ENCODE measurements at regions of chrX and their contacts with region 1.

Region 1: GRCh38 chrX:3651276-3651675 is 62.2 kb downstream of the PRKX start:
- DNase-seq: peak; percentile 38
- H3K4me3 ChIP-seq: no peak overlapping the region
- H3K27ac ChIP-seq: no peak overlapping the region
- H3K4me1 ChIP-seq: no peaks in the 10 kb centered on the region
- H3K27me3 ChIP-seq: no peaks in the 10 kb centered on the region
- CTCF ChIP-seq: peak; percentile 80
- EP300 ChIP-seq: no peak
- RAD21 ChIP-seq: peak; percentile 63

Region 2: DNA sequence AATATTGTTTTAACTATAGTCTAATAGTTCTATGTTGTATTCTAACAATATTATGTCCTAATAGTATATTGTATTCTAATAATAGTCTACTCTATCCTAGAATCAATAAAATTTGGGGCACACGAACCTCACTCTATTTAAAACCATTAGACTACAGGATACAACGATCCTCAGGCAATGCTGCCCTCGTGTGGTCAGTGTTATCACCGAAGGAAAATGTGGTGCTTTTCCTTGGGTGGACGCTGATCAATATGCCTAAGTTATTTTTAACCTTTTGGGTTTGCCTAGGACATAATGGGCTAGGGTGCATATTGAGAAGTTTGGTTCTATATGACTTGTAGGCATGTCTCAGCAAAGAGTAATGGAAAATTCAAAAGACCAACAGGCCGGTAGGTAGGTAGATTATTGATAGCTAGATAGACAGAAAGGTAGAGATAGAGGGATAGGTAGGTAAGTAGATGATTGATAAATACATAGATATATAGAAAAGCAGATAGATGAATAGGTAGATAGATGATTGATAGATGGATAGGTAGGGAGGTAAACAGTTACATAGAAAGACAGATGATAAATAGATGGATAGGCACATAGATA is 12.9 kb before region 1 on chrX:
- CTCF ChIA-PET with region 1: interaction called, 10 read pairs
- POLR2A ChIA-PET with region 1: no interaction called
- DNase-seq: peak; percentile 57
- H3K4me3 ChIP-seq: no peak overlapping the region
- H3K27ac ChIP-seq: no peak overlapping the region
- H3K4me1 ChIP-seq: no peaks in the 10 kb centered on the region
- H3K27me3 ChIP-seq: no peaks in the 10 kb centered on the region; the same call in 1 of the 2 replicates
- CTCF ChIP-seq: peak; percentile 89
- EP300 ChIP-seq: no peak
- RAD21 ChIP-seq: peak; percentile 73

Region 3: DNA sequence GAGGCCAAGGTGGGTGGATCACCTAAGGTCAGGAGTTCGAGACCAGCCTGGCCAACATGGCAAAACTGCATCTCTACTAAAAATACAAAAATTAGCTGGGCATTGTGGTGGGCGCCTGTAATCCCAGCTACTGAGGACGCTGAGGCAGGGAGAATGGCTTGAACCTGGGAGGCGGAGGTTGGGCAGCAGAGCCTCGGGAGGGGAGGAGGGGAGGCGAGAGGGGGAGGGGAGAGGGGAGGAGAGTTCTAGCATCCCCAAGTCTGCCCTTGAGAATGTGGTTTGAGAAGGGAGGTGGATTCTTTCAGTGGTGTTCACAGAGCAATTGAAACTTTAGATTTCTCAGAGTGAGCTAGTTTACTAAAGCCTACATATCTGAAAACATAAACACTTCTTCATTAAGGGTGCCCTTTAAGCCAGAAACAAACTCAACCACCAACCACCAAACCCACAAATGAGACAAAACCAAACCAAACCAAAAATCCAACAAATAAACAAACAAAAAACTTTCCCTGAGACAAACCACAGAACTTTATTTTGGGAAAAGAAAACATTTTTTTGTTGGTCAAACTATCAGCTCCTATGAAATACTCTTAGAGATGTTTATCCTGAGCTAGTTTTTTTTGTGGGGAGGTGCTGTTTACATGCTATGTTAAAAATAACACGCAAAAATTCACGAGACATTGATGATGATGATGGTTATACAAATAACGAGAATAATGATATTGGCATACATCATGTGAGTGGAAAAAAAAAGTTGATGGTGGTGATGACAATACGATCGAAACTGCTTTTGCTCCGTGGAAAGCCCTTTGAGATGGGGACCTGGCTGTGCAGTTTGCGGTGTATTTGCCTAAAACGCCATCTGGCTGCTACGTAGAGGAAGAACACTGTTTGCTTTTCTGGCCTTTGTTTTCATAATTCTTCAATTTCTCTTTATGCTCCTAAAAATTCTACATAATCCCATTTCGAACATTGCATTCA is 160.3 kb after region 1 on chrX:
- CTCF ChIA-PET with region 1: interaction called, 11 read pairs
- POLR2A ChIA-PET with region 1: interaction called, 3 read pairs
- DNase-seq: peak; percentile 35
- H3K4me3 ChIP-seq: no peak overlapping the region
- H3K27ac ChIP-seq: no peak overlapping the region
- H3K4me1 ChIP-seq: peaks cover 0 to 1% of the 10 kb centered on the region in 2 experiments; a peak in 1 of 4 replicates
- H3K27me3 ChIP-seq: peaks cover 15% of the 10 kb centered on the region; the same call in 1 of the 2 replicates
- CTCF ChIP-seq: peak; percentile 54
- EP300 ChIP-seq: no peak
- RAD21 ChIP-seq: peak; percentile 66

Measured in SK-N-SH (cell line).